ENCODE measurements at regions of chr5 and their contacts with region 1.

Region 1: GRCh38 chr5:72938206-72938605 is 17.6 kb upstream of the FCHO2 start:
- ATAC-seq: peak in 3 of 8 experiments; percentile 37 to 98 (median 82)
- H3K4me3 ChIP-seq: no peak overlapping the region
- H3K27ac ChIP-seq: no peak overlapping the region
- H3K4me1 ChIP-seq: no peaks in the 10 kb centered on the region

Region 2: DNA sequence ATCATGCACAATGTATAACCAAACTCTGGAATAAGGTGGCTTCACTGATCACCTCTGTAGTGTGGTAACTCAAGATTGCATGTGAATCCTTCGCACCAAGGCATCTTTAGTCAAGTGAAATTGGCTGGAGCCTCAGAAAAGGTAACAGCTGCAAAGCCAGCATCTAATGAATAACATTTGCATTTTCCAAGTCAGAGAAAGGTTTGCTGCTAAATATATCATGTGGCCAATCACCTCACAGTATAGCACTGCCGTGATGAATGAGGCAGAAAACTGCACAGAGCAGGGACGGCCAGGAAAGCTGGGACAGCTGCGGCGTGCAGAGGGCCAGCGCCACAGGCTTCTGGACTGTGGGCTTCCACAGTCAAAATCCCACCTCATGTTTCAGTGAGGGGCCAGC is 636.6 kb before region 1 on chr5:
- in situ Hi-C with region 1: no loop called
- ATAC-seq: peak in 6 of 8 experiments; percentile 52 to 100 (median 100)
- H3K4me3 ChIP-seq: peak overlapping the region in 1 of 5 donors; percentile 4
- H3K27ac ChIP-seq: peak overlapping the region; percentile 47 to 81
- H3K4me1 ChIP-seq: peaks cover 15 to 21% of the 10 kb centered on the region in 2 donors

Region 3: DNA sequence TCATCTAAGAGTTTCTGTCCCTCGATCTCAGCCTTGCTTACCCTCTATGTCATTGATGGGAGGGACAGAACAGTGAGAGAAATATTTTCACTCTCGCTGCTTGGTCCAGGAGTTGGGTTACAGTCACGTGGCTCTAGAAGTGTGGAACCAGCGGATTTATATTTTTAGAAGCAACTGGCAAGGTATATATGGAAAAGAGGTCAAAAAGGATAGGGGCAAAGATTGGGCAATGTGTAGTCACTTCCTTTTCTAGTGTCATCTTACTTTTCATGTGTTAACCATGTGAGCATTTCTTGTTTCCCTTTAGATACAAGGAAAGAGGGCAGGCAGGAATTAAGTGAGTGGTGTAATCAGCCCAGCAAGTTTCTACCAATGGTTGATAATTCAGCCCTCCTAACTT is 319.5 kb before region 1 on chr5:
- in situ Hi-C with region 1: no loop called
- ATAC-seq: no peak
- H3K4me3 ChIP-seq: no peak overlapping the region
- H3K27ac ChIP-seq: no peak overlapping the region
- H3K4me1 ChIP-seq: no peaks in the 10 kb centered on the region

Region 4: DNA sequence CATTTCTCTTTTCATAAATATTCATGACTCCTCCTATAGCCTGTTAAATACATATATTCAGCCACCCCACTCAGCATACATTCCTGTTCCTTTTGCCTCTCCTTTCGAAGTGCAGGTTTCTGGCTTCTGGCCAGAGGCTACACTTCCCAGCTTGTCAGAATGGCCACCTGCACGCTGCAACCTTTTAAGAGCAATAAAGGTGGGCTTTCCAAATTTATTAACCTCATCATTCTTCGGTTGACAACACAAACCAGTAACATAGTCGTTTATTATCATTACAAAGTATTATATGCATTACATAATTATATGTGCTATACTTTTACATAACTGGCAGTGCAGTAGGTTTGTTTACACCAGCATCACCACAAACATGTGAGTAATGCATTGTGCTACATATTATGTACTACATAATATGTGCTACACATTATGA is 165.7 kb after region 1 on chr5:
- in situ Hi-C with region 1: no loop called
- ATAC-seq: peak in 3 of 8 experiments; percentile 30 to 96 (median 82)
- H3K4me3 ChIP-seq: no peak overlapping the region
- H3K27ac ChIP-seq: no peak overlapping the region
- H3K4me1 ChIP-seq: no peaks in the 10 kb centered on the region

Region 5: GRCh38 chr5:73189871-73190376 is 251.7 kb after region 1 on chr5:
- in situ Hi-C with region 1: loop called in 1 of 9 experiments (anchors 25 kb)
- ATAC-seq: peak in 7 of 8 experiments; percentile 30 to 98 (median 80)
- H3K4me3 ChIP-seq: no peak overlapping the region
- H3K27ac ChIP-seq: no peak overlapping the region
- H3K4me1 ChIP-seq: peaks cover 0 to 4% of the 10 kb centered on the region in 2 donors

Measured in motor neuron (in vitro differentiated cells).